ENCODE measurements at regions of chrX and their contacts with region 1.

Region 1: GRCh38 chrX:130916636-130917422 is 13.8 kb upstream of the ENOX2 start:
- DNase-seq: no peak
- ATAC-seq: peak; percentile 74
- H3K4me3 ChIP-seq: no peak overlapping the region
- H3K27ac ChIP-seq: no peak overlapping the region
- H3K4me1 ChIP-seq: no peaks in the 10 kb centered on the region
- H3K27me3 ChIP-seq: no peaks in the 10 kb centered on the region

Region 2: GRCh38 chrX:130339408-130340222 is 577.2 kb before region 1 on chrX and contains the start of gene SLC25A14:
- intact Hi-C with region 1: loop called in 1 of 2 experiments (anchors 10 kb)
- DNase-seq: peak; percentile 82 to 89
- ATAC-seq: peak; percentile 87
- H3K4me3 ChIP-seq: peak within 1 kb of the TSS; percentile 67 to 84
- H3K27ac ChIP-seq: no peak within 1 kb of the TSS
- H3K4me1 ChIP-seq: no peaks in the 10 kb centered on the region
- H3K27me3 ChIP-seq: no peaks in the 10 kb centered on the region
- total RNA-seq, gene SLC25A14: 10.5 to 14.7 TPM

Region 3: GRCh38 chrX:130393451-130394074 is 523.3 kb before region 1 on chrX:
- intact Hi-C with region 1: loop called (anchors 1 to 5 kb)
- DNase-seq: peak in 1 of 2 donors; percentile 63
- ATAC-seq: peak; percentile 76
- H3K4me3 ChIP-seq: no peak overlapping the region
- H3K27ac ChIP-seq: no peak overlapping the region
- H3K4me1 ChIP-seq: no peaks in the 10 kb centered on the region
- H3K27me3 ChIP-seq: no peaks in the 10 kb centered on the region

Region 4: GRCh38 chrX:130539721-130540321 is 377.0 kb before region 1 on chrX:
- intact Hi-C with region 1: loop called (anchors 5 kb)
- DNase-seq: peak in 1 of 2 donors; percentile 62
- ATAC-seq: no peak
- H3K4me3 ChIP-seq: no peak overlapping the region
- H3K27ac ChIP-seq: no peak overlapping the region
- H3K4me1 ChIP-seq: no peaks in the 10 kb centered on the region
- H3K27me3 ChIP-seq: no peaks in the 10 kb centered on the region

Region 5: GRCh38 chrX:130575831-130576389 is 340.9 kb before region 1 on chrX:
- intact Hi-C with region 1: loop called in 1 of 2 experiments (anchors 5 kb)
- DNase-seq: peak; percentile 51 to 82
- ATAC-seq: no peak
- H3K4me3 ChIP-seq: no peak overlapping the region
- H3K27ac ChIP-seq: no peak overlapping the region
- H3K4me1 ChIP-seq: no peaks in the 10 kb centered on the region
- H3K27me3 ChIP-seq: no peaks in the 10 kb centered on the region

Region 6: DNA sequence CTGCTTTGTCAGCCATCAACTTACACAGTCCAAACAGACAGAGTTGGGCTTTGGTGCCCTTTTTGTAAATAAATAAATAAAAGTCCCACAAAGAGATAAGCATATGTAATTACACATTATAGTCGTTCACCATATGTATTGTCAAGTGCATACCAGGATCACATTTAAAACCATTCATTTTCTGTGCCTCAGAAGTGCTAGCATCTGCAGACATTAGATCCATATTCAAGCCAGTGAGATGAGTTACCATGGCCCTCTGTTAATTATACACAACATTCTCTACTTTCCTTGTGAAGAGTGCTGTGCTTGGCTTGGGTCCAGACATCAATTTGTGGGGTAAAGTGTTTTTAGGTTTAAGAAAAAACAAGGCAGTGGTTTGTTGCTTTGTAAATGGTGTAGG is 90.6 kb before region 1 on chrX:
- intact Hi-C with region 1: no loop called
- DNase-seq: no peak
- ATAC-seq: no peak
- H3K4me3 ChIP-seq: no peak overlapping the region
- H3K27ac ChIP-seq: no peak overlapping the region
- H3K4me1 ChIP-seq: peaks cover 0 to 2% of the 10 kb centered on the region in 2 donors
- H3K27me3 ChIP-seq: no peaks in the 10 kb centered on the region